ENCODE measurements at regions of chr19 and their contacts with region 1.

Region 1: GRCh38 chr19:33241530-33242101 is 16.0 kb upstream of the SLC7A10 start:
- DNase-seq: peak in 1 of 2 experiments; percentile 60
- H3K4me3 ChIP-seq: no peak overlapping the region
- H3K4me3 Mint-ChIP-seq: no peak overlapping the region
- H3K27ac Mint-ChIP-seq: no peak overlapping the region
- H3K4me1 ChIP-seq: peaks cover 11% of the 10 kb centered on the region; the same call in 1 of the 2 replicates
- H3K4me1 Mint-ChIP-seq: peaks cover 6% of the 10 kb centered on the region
- H3K27me3 ChIP-seq: no peaks in the 10 kb centered on the region
- H3K27me3 Mint-ChIP-seq: no peaks in the 10 kb centered on the region
- CTCF ChIP-seq: peak; percentile 77 to 94

Region 2: DNA sequence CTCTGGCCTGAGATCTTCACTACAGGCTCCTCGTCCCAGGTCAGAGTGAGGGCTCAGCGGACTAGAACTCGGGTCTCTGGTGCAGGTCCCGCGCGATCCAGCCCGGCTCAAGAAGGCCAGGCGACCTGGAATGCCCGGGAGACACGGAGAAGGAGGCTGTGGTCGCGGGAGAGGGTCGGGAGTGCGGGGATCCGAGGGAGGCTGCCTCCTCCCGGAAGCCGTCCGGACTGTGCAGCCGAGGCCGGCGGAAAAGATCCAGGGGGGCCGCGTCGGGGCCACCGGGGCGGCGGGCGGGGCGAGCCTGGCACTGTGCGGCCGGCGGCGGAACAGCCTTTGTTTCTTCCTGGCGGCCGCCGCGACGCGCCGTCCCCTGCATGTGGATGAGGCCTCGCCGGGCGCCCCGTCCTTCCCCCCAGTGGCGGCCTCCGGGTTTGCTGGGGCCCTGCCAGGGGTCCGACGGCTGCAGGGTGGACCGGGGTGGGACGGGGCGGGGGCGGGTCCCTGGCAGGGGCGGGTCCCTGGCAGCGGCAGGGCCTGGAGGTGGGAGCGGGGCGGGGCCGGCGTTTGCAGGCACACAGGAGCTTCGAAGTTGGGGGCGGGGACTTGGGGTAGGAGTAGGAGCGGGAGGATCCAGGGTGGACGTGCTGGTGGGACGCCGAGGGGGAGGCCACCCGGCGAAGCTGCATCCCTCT is 14.9 kb before region 1 on chr19:
- CTCF ChIA-PET with region 1: no interaction called
- POLR2A ChIA-PET with region 1: no interaction called
- intact Hi-C with region 1: no loop called
- DNase-seq: no peak
- H3K4me3 ChIP-seq: no peak overlapping the region
- H3K4me3 Mint-ChIP-seq: no peak overlapping the region
- H3K27ac Mint-ChIP-seq: no peak overlapping the region
- H3K4me1 ChIP-seq: no peaks in the 10 kb centered on the region
- H3K4me1 Mint-ChIP-seq: no peaks in the 10 kb centered on the region
- H3K27me3 ChIP-seq: no peaks in the 10 kb centered on the region
- H3K27me3 Mint-ChIP-seq: peaks cover 2% of the 10 kb centered on the region
- CTCF ChIP-seq: no peak

Region 3: GRCh38 chr19:33279430-33280350 is 38.1 kb after region 1 on chr19:
- CTCF ChIA-PET with region 1: interaction called, 8 read pairs
- POLR2A ChIA-PET with region 1: no interaction called
- intact Hi-C with region 1: loop called (anchors 5 kb)
- DNase-seq: peak; percentile 51 to 69
- H3K4me3 ChIP-seq: no peak overlapping the region
- H3K4me3 Mint-ChIP-seq: no peak overlapping the region
- H3K27ac Mint-ChIP-seq: peak overlapping the region; percentile 97
- H3K4me1 ChIP-seq: peaks cover 65% of the 10 kb centered on the region
- H3K4me1 Mint-ChIP-seq: peaks cover 27% of the 10 kb centered on the region
- H3K27me3 ChIP-seq: no peaks in the 10 kb centered on the region
- H3K27me3 Mint-ChIP-seq: no peaks in the 10 kb centered on the region
- CTCF ChIP-seq: no peak

Region 4: GRCh38 chr19:33292595-33293441 is 51.2 kb after region 1 on chr19:
- CTCF ChIA-PET with region 1: interaction called, 3 read pairs
- POLR2A ChIA-PET with region 1: no interaction called
- intact Hi-C with region 1: loop called (anchors 5 kb)
- DNase-seq: no peak
- H3K4me3 ChIP-seq: no peak overlapping the region
- H3K4me3 Mint-ChIP-seq: peak overlapping the region; percentile 69
- H3K27ac Mint-ChIP-seq: peak overlapping the region; percentile 97
- H3K4me1 ChIP-seq: peaks cover 62% of the 10 kb centered on the region
- H3K4me1 Mint-ChIP-seq: peaks cover 41% of the 10 kb centered on the region
- H3K27me3 ChIP-seq: no peaks in the 10 kb centered on the region
- H3K27me3 Mint-ChIP-seq: no peaks in the 10 kb centered on the region
- CTCF ChIP-seq: no peak